GM12878 (cell line): ENCODE measurements at regions of chr11 and their contacts with region 1.

Region 1: DNA sequence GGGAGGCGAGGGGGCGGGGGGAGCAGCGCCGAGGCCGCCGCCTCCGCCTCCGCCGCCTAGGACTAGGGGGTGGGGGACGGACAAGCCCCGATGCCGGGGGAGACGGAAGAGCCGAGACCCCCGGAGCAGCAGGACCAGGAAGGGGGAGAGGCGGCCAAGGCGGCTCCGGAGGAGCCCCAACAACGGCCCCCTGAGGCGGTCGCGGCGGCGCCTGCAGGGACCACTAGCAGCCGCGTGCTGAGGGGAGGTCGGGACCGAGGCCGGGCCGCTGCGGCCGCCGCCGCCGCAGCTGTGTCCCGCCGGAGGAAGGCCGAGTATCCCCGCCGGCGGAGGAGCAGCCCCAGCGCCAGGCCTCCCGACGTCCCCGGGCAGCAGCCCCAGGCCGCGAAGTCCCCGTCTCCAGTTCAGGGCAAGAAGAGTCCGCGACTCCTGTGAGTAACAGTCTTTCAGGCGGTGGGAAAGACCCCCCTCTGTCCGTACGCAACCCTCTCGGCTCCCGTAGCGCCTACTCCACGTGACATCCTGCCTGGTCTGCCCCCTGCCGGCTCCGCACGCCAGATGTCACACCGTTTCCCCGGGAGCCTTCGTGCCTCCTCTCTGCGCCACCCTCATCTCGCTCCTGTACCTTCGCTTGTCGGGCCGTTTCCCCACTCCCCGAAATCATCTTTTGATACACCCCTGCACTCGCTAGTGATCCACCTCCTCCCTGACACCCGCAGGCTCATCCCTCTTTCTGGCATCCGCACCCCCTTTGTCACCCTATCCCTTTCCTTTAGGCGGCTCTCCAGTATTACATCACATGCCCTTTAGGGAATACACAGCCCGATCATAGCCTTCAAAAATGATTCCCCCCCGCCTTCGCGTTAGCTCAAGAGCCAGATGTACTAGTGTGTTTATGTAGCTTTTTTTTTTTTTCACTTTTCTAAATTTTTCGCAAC is 598 bp downstream of the ZFP91 start:
- DNase-seq: no peak
- ATAC-seq: peak; percentile 52
- H3K4me3 ChIP-seq: peak overlapping the region; percentile 82
- H3K27ac ChIP-seq: peak overlapping the region; percentile 98
- H3K4me1 ChIP-seq: peaks cover 12% of the 10 kb centered on the region
- H3K27me3 ChIP-seq: no peaks in the 10 kb centered on the region
- CTCF ChIP-seq: peak; percentile 78 to 86 (median 84)
- EP300 ChIP-seq: peak in 1 of 2 experiments; percentile 55; a peak in 1 of 4 replicates
- POLR2A ChIP-seq: peak; percentile 79
- RAD21 ChIP-seq: peak; percentile 24; the same call in 1 of the 2 replicates

Region 2: DNA sequence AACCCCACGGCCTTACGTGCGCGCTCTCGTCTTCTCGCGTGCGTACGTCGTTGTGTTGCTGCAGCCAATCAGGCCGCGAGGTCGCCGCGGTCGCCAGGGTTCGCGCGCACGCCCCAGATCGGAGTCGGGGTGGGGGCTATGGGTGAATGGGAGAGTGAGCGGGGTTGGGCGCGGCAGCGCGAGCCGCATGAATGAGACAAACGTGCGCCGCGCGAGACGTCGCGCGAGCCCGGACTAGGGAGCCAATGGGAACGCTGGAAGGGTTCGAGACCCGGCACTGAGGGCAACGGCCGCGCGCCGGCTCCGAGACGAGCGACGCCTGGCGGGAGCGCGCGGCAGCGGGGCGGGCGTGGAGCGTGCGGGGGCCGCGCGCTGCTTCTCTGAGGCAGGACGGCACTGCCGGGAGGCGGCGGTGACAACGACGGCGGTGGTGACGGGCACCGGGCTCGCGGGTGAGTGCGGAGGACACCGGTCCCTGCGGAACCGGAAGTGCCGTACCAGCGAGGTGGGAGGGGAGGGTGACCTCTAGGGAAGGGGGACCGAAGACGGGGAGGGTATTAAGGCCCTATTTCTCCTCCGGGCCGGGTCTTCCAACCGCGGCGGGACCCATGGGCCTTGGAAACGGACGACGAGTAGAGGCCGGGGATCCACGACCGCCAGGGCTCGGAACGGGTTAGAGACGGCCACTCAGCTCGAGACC is 911.6 kb before region 1 on chr11 and contains the start of gene ZDHHC5:
- CTCF ChIA-PET with region 1: no interaction called
- POLR2A ChIA-PET with region 1: no interaction called
- RAD21 ChIA-PET with region 1: no interaction called
- SMC1A ChIA-PET with region 1: no interaction called
- in situ Hi-C with region 1: no loop called
- intact Hi-C with region 1: loop called (anchors 2 kb)
- DNase-seq: peak; percentile 99
- ATAC-seq: peak; percentile 91
- H3K4me3 ChIP-seq: peak within 1 kb of the TSS; percentile 90
- H3K27ac ChIP-seq: peak within 1 kb of the TSS; percentile 99
- H3K4me1 ChIP-seq: peaks cover 7% of the 10 kb centered on the region
- H3K27me3 ChIP-seq: no peaks in the 10 kb centered on the region
- CTCF ChIP-seq: peak; percentile 25 to 37 (median 34); a peak in 4 of 6 replicates
- EP300 ChIP-seq: no peak
- POLR2A ChIP-seq: peak; percentile 98
- RAD21 ChIP-seq: no peak
- polyA plus RNA-seq, gene ZDHHC5: 3.9 to 7.3 TPM

Region 3: DNA sequence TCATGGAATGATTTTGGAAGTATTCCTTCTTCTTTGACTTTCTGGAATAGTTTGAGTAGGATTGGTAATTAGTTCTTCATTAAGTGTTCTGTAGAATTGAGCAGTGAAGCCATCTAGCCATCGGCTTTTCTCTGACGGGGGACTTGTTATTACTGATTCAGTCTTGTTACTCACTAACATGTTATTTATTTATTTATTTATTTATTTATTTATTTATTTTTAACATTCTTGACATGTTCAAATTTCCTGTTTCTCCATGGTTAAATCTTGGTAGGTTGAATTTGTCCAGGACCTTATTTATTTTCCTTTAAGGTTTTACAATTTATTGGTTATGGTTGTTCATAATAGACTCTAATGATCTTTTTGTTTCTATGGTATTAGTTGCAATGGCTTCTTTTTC is 335.5 kb before region 1 on chr11:
- CTCF ChIA-PET with region 1: no interaction called
- POLR2A ChIA-PET with region 1: no interaction called
- RAD21 ChIA-PET with region 1: no interaction called
- SMC1A ChIA-PET with region 1: no interaction called
- in situ Hi-C with region 1: no loop called
- intact Hi-C with region 1: no loop called
- DNase-seq: no peak
- ATAC-seq: no peak
- H3K4me3 ChIP-seq: no peak overlapping the region
- H3K27ac ChIP-seq: no peak overlapping the region
- H3K4me1 ChIP-seq: no peaks in the 10 kb centered on the region
- H3K27me3 ChIP-seq: no peaks in the 10 kb centered on the region
- CTCF ChIP-seq: no peak
- EP300 ChIP-seq: no peak
- POLR2A ChIP-seq: no peak
- RAD21 ChIP-seq: no peak

Region 4: GRCh38 chr11:58616594-58616993 is 37.1 kb after region 1 on chr11:
- CTCF ChIA-PET with region 1: interaction called, 10 read pairs
- POLR2A ChIA-PET with region 1: no interaction called
- RAD21 ChIA-PET with region 1: interaction called, 3 read pairs
- SMC1A ChIA-PET with region 1: interaction called, 12 read pairs
- in situ Hi-C with region 1: no loop called
- intact Hi-C with region 1: no loop called
- DNase-seq: no peak
- ATAC-seq: no peak
- H3K4me3 ChIP-seq: no peak overlapping the region
- H3K27ac ChIP-seq: no peak overlapping the region
- H3K4me1 ChIP-seq: no peaks in the 10 kb centered on the region
- H3K27me3 ChIP-seq: no peaks in the 10 kb centered on the region
- CTCF ChIP-seq: no peak
- EP300 ChIP-seq: no peak
- POLR2A ChIP-seq: no peak
- RAD21 ChIP-seq: no peak

Region 5: DNA sequence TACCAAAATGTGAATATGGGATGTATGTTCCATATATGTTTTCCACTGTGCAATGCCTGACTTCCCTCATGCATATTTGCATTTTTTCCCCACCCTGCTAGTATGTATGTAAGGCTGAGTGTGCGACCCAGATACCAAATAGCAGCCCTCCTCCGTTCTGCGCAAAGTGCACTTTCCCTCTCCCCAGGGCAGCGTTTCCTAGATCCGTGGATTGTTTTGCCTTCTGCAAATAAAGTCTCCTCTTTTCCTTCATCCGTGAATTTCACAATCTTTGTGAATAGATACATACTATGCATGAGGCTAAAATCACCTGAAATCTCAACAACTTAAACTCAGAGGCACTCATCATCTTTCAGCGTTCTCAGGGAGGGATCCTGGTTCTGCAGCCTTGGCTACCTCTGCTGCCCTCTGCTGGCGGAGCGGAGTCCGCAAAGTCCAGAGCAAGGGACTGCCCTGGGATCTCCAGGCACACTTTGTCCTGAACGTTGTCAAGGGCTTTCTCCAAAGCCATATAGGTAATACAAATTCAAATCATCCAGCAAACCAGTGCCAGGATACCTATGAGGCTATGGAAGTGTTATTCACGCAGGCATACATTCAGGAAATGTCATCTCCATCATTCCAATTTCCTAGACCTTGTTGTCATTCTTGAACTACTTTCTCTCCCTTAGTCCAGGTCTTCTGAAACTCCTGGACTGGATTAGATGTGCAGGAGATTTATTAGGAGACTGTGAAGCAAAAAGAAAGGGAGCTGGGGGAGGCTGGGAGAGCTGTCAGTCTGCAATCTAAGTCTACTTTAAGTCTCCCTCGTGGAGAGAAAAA is 96.1 kb after region 1 on chr11:
- CTCF ChIA-PET with region 1: interaction called, 21 read pairs
- POLR2A ChIA-PET with region 1: no interaction called
- RAD21 ChIA-PET with region 1: interaction called, 8 read pairs
- SMC1A ChIA-PET with region 1: interaction called, 23 read pairs
- in situ Hi-C with region 1: no loop called
- intact Hi-C with region 1: loop called (anchors 1 kb)
- DNase-seq: no peak
- ATAC-seq: peak; percentile 100
- H3K4me3 ChIP-seq: no peak overlapping the region
- H3K27ac ChIP-seq: no peak overlapping the region
- H3K4me1 ChIP-seq: no peaks in the 10 kb centered on the region
- H3K27me3 ChIP-seq: no peaks in the 10 kb centered on the region
- CTCF ChIP-seq: peak; percentile 91 to 97 (median 97)
- EP300 ChIP-seq: no peak
- POLR2A ChIP-seq: no peak
- RAD21 ChIP-seq: peak; percentile 83

Region 6: DNA sequence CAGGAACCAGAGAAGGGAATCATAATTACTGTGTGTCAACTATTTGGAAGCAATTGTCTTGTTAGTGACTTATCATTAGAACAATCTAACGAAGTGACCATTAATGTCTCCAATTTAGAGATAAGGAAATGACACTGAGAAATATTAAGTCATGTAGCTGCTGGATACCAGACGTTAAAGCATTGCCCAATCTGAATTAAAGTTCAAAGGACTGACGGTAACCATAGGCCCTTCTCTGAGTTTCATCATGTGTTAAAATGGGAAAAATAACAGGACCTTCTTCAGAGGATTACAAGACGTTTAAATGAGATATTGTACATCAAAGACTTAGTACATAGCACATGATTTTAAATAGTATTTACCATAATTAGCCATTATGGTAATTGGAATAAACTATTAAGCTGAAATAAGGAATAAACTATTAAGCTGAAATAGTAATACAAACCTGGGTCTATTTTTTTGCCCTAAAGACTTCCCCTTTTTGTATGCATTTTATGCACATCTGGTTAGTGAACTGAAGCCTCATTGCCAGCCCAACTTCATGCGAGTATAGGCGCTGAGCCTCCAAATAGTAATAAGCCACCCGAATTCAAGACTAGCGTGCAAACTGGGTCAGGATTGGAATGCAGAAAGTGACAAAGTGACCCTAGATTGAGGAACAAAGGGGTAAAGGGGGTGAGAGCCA is 400.8 kb after region 1 on chr11:
- CTCF ChIA-PET with region 1: no interaction called
- POLR2A ChIA-PET with region 1: no interaction called
- RAD21 ChIA-PET with region 1: no interaction called
- SMC1A ChIA-PET with region 1: no interaction called
- in situ Hi-C with region 1: no loop called
- intact Hi-C with region 1: no loop called
- DNase-seq: no peak
- ATAC-seq: no peak
- H3K4me3 ChIP-seq: no peak overlapping the region
- H3K27ac ChIP-seq: no peak overlapping the region
- H3K4me1 ChIP-seq: no peaks in the 10 kb centered on the region
- H3K27me3 ChIP-seq: no peaks in the 10 kb centered on the region
- CTCF ChIP-seq: no peak
- EP300 ChIP-seq: no peak
- POLR2A ChIP-seq: no peak
- RAD21 ChIP-seq: no peak

Region 7: DNA sequence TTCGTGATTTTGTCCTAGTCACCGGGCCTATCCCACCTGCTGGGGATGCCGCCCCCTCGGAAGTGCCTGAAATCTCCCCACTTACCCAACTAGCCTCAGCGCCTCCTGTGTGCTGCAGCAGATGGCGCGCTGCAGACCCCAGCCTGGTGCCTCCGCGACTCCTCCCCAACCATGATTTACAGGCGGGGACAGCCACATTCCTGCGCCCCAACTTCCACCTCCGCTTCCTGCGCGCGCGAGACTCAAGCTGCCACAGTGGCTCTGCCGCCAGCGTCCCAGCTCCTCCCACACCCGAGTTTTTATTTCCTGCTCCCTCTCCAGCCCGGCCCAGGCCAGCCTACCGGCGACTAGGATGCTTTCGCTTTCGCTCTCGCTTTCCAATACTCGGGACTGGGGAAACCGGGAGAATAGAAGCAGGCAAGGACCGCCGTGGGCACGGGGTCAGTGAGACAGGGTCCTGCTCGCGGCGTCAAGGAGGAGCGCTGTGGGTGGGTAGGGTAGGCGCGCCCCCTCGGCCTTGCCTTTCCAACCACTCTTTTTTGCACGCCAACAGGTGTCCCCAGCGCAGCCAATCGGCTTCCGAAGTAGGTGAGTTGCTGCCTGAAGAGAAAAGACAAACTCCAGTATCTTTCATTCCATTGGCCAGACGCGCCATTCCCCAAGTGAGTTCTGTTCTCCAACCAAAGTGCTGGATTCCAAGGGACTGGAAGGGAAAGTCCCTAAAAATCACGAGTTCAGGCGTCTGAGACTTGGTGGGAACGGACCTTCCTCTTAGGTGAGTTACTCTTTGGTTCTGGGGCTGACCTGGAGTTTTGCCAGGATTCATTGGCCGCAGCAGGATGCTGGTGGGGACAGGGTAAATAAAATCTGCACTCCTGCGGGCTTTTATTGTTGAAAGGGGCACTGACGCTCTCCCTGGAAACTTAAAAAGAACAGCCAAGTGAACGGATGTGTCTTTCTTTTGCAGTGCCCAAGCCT is 563.4 kb after region 1 on chr11 and contains the start of gene FAM111A:
- CTCF ChIA-PET with region 1: no interaction called
- POLR2A ChIA-PET with region 1: no interaction called
- RAD21 ChIA-PET with region 1: interaction called, 3 read pairs
- SMC1A ChIA-PET with region 1: interaction called, 4 read pairs
- in situ Hi-C with region 1: loop called (anchors 5 kb)
- intact Hi-C with region 1: loop called (anchors 2 kb)
- DNase-seq: peak; percentile 69
- ATAC-seq: peak; percentile 85
- H3K4me3 ChIP-seq: peak within 1 kb of the TSS; percentile 83
- H3K27ac ChIP-seq: peak within 1 kb of the TSS; percentile 91
- H3K4me1 ChIP-seq: peaks cover 21% of the 10 kb centered on the region; the same call in 1 of the 2 replicates
- H3K27me3 ChIP-seq: no peaks in the 10 kb centered on the region
- CTCF ChIP-seq: peak; percentile 39 to 54 (median 39)
- EP300 ChIP-seq: no peak
- POLR2A ChIP-seq: peak; percentile 73; the same call in 1 of the 2 replicates
- RAD21 ChIP-seq: peak; percentile 44; the same call in 1 of the 2 replicates
- polyA plus RNA-seq, gene FAM111A: 26.6 to 41.6 TPM

Region 8: DNA sequence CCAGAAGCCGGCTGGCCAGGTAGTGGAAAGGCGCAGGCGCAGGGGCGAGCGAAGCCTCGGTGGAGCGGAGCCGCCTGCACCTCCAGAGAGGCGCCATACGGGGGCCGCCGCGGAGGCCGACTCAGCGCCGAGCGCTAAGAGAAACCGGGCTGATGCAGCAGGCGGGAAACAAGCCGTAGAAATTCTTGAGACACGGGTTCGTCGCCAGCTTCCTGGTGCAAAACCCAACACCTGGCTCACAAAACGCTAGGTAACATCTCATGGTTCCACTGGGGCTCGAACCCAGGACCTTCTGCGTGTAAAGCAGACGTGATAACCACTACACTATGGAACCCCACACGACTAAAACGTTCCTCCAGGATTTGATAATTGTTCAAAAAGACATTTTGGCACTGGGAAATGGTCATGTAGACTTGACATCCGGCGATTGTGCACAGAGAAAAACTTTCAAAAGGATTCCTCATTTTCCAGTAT is 970.9 kb after region 1 on chr11:
- CTCF ChIA-PET with region 1: no interaction called
- POLR2A ChIA-PET with region 1: no interaction called
- RAD21 ChIA-PET with region 1: no interaction called
- SMC1A ChIA-PET with region 1: no interaction called
- in situ Hi-C with region 1: loop called (anchors 10 kb)
- intact Hi-C with region 1: loop called (anchors 10 kb)
- DNase-seq: peak; percentile 96
- ATAC-seq: peak; percentile 96
- H3K4me3 ChIP-seq: peak overlapping the region; percentile 74
- H3K27ac ChIP-seq: peak overlapping the region; percentile 83
- H3K4me1 ChIP-seq: no peaks in the 10 kb centered on the region
- H3K27me3 ChIP-seq: no peaks in the 10 kb centered on the region
- CTCF ChIP-seq: peak; percentile 39 to 59 (median 57)
- EP300 ChIP-seq: peak in 1 of 2 experiments; percentile 57; a peak in 1 of 4 replicates
- POLR2A ChIP-seq: peak; percentile 40; the same call in 1 of the 2 replicates
- RAD21 ChIP-seq: no peak